ENCODE measurements at regions of chr11 and their contacts with region 1.

Region 1: DNA sequence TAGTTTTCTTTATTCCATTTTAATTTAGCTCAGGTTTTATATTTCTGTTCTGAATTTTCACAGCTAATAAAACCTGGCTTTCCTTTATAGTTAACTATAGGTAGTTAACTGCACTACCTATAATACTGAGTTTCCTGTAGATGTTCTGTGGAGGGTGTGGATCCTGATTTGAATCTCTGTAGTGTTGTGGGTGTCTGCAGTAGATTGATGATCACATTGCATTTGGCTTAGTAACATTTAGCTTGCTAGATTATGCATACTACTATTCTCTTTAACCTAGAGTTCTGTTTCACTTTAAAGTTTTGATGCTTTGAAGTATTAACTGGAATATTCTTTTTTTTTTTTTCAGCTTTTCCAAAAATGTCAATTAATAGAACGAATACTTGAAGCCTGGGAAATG is 110.1 kb downstream of the PPP6R3 start:
- DNase-seq: no peak
- H3K4me3 ChIP-seq: no peak overlapping the region
- H3K27ac ChIP-seq: no peak overlapping the region
- H3K4me1 ChIP-seq: no peaks in the 10 kb centered on the region
- H3K27me3 ChIP-seq: no peaks in the 10 kb centered on the region
- CTCF ChIP-seq: no peak
- POLR2A ChIP-seq: no peak

Region 2: GRCh38 chr11:68584097-68584496 is 13.4 kb after region 1 on chr11:
- CTCF ChIA-PET with region 1: interaction called, 11 read pairs
- POLR2A ChIA-PET with region 1: no interaction called
- dilution Hi-C with region 1: no loop called
- intact Hi-C with region 1: no loop called
- DNase-seq: peak; percentile 18
- H3K4me3 ChIP-seq: no peak overlapping the region
- H3K27ac ChIP-seq: no peak overlapping the region
- H3K4me1 ChIP-seq: peaks cover 13% of the 10 kb centered on the region
- H3K27me3 ChIP-seq: no peaks in the 10 kb centered on the region
- CTCF ChIP-seq: peak; percentile 55 to 59
- POLR2A ChIP-seq: no peak